MCF 10A (cell line): ENCODE measurements at regions of chr7 and their contacts with region 1.

Region 1: GRCh38 chr7:80622541-80622940 is 15.9 kb upstream of the CD36 start:
- DNase-seq: peak; percentile 22
- H3K4me3 Mint-ChIP-seq: no peak overlapping the region
- H3K27ac Mint-ChIP-seq: no peak overlapping the region
- H3K4me1 Mint-ChIP-seq: peaks cover 18% of the 10 kb centered on the region
- H3K27me3 Mint-ChIP-seq: no peaks in the 10 kb centered on the region
- CTCF ChIP-seq: no peak

Region 2: GRCh38 chr7:80542421-80542820 is 80.1 kb before region 1 on chr7:
- CTCF ChIA-PET with region 1: interaction called, 3 read pairs
- POLR2A ChIA-PET with region 1: interaction called, 10 read pairs
- intact Hi-C with region 1: no loop called
- DNase-seq: peak; percentile 89
- H3K4me3 Mint-ChIP-seq: peak overlapping the region; percentile 11
- H3K27ac Mint-ChIP-seq: no peak overlapping the region
- H3K4me1 Mint-ChIP-seq: peaks cover 7% of the 10 kb centered on the region
- H3K27me3 Mint-ChIP-seq: no peaks in the 10 kb centered on the region
- CTCF ChIP-seq: no peak

Region 3: GRCh38 chr7:80634505-80634904 is 12.0 kb after region 1 on chr7:
- CTCF ChIA-PET with region 1: interaction called, 3 read pairs
- POLR2A ChIA-PET with region 1: interaction called, 13 read pairs
- intact Hi-C with region 1: no loop called
- DNase-seq: peak; percentile 86
- H3K4me3 Mint-ChIP-seq: no peak overlapping the region
- H3K27ac Mint-ChIP-seq: peak overlapping the region; percentile 71
- H3K4me1 Mint-ChIP-seq: peaks cover 21% of the 10 kb centered on the region
- H3K27me3 Mint-ChIP-seq: no peaks in the 10 kb centered on the region
- CTCF ChIP-seq: no peak

Region 4: GRCh38 chr7:80833289-80834268 is 211.0 kb after region 1 on chr7:
- CTCF ChIA-PET with region 1: no interaction called
- POLR2A ChIA-PET with region 1: no interaction called
- intact Hi-C with region 1: no loop called
- DNase-seq: no peak
- H3K4me3 Mint-ChIP-seq: no peak overlapping the region
- H3K27ac Mint-ChIP-seq: no peak overlapping the region
- H3K4me1 Mint-ChIP-seq: peaks cover 28% of the 10 kb centered on the region
- H3K27me3 Mint-ChIP-seq: no peaks in the 10 kb centered on the region
- CTCF ChIP-seq: no peak

Region 5: DNA sequence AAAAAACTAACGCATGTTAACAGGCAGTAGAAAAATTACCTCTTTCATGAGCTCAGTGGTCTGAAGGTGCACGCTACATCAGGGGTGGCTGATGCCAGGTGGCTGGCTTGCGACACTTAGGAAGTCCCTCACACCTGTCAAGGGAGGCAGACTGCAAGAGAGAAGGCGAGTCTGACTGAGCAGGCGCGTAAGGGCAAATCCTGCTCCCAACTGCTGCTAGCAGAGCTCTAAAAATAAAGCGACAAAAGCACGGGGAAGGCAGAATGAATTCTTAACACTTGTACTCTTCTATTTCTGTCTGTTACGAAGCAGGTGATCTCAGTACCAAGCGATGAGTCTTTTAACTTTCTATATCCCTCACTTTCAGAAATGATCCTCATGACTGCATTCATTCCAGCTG is 1787.9 kb after region 1 on chr7:
- CTCF ChIA-PET with region 1: no interaction called
- POLR2A ChIA-PET with region 1: no interaction called
- intact Hi-C with region 1: no loop called
- DNase-seq: no peak
- H3K4me3 Mint-ChIP-seq: no peak overlapping the region
- H3K27ac Mint-ChIP-seq: no peak overlapping the region
- H3K4me1 Mint-ChIP-seq: no peaks in the 10 kb centered on the region
- H3K27me3 Mint-ChIP-seq: no peaks in the 10 kb centered on the region
- CTCF ChIP-seq: no peak